ENCODE measurements at regions of chr22 and their contacts with region 1.

Region 1: DNA sequence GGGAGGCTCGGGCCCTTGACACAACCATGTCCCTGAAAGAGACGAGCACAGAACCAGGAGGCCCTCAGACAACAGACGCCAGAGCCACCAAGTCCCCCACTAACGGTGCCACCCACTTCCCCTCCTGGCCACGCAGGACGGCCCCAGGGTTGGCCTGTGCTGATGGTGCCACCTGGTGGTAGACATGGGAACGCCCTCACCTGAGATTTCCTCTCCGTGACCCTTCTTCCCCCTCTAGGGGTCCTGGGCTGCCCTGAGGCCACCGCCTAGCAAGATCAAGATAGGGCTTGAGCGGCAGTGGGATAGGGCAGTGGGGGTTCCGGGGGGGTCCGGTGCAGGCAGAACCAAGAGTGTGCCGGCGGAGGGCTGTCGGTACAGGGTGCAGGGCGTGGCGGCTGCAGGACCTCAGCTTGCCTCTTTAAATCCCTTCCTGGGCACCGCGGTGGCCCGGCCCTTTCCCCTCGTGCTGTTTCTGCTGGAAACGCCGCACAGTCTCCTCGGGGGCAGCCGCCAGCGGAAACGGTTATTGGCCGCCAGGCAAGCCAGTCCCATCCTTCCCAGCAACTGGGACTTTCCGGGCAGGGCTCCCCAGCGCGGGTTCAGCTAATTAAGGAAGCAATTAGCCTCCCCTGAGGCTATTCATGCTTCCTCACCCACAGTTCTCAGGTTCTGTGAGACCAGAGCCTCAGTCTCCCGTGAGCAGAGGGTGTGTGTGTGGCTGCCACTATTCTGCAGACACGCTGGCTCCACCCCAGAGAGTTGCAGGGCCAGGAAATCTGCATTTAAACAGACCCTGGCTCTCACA is 5.5 kb upstream of the NFAM1 start:
- DNase-seq: peak; percentile 74 to 79
- H3K4me3 ChIP-seq: peak overlapping the region in 1 of 3 donors; percentile 27
- H3K27ac ChIP-seq: peak overlapping the region in 1 of 3 donors; percentile 56
- H3K4me1 ChIP-seq: peaks cover 44 to 55% of the 10 kb centered on the region in 2 donors
- H3K27me3 ChIP-seq: no peaks in the 10 kb centered on the region
- CTCF ChIP-seq: peak; percentile 92 to 99 (median 96)
- POLR2A ChIP-seq: no peak

Region 2: DNA sequence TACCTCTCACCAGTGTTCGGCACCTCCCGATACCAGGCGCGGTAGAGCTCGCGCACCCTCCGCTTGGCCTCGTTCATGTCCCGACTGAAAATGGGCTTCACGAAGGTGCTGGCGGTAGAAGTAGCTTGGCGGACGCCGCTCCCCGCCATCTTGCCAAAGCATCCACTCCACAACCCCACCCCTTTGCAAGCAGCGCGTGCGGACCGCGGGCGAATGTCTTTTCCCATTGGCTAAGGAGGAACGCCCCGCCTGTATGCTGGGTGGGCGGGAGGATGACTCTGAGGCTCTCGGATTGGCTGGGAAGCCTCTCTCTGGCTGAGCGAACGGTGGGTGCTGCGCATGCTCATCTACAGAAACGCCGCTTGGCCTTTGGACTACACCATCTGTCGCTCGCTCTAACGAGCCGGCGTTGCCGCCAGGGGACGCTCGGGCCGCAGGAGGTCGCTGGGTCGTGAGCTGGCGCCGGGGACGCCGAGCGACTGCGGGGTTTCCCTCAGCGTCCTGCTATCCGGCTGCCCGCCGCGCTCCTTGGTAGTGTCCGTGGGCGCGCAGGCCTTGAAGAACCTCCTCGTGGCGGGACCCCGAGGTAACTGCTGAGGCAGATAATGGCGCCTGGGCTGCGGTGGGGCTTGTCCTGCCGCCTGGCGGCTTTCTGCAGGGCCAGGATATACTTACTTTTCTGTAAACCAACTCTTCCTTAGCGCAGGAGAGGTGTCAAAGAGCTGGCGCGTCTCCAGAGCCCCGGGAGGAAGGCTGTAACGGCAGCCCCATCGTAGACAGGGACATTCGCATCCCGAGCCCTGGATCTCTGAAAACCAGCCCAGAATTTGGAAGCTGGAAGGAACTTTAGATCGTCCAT is 346.9 kb before region 1 on chr22 and contains the start of gene NDUFA6:
- intact Hi-C with region 1: loop called (anchors 5 kb)
- DNase-seq: peak; percentile 99
- H3K4me3 ChIP-seq: peak within 1 kb of the TSS; percentile 58 to 87 (median 72)
- H3K27ac ChIP-seq: peak within 1 kb of the TSS; percentile 89 to 95 (median 94)
- H3K4me1 ChIP-seq: peaks cover 13 to 14% of the 10 kb centered on the region in 2 donors
- H3K27me3 ChIP-seq: no peaks in the 10 kb centered on the region
- CTCF ChIP-seq: peak; percentile 81 to 99 (median 96)
- POLR2A ChIP-seq: peak; percentile 48 to 98
- total RNA-seq, gene NDUFA6: 32.9 to 85.6 (median 73.4) TPM

Region 3: GRCh38 chr22:42169055-42169469 is 268.6 kb before region 1 on chr22:
- intact Hi-C with region 1: loop called (anchors 2 kb)
- DNase-seq: peak; percentile 75 to 78
- H3K4me3 ChIP-seq: no peak overlapping the region
- H3K27ac ChIP-seq: no peak overlapping the region
- H3K4me1 ChIP-seq: peaks cover 8 to 10% of the 10 kb centered on the region in 2 donors
- H3K27me3 ChIP-seq: no peaks in the 10 kb centered on the region
- CTCF ChIP-seq: peak; percentile 62 to 99 (median 83)
- POLR2A ChIP-seq: no peak

Region 4: GRCh38 chr22:42369245-42370041 is 68.2 kb before region 1 on chr22:
- intact Hi-C with region 1: loop called (anchors 10 kb)
- DNase-seq: peak; percentile 94
- H3K4me3 ChIP-seq: peak overlapping the region in 2 of 3 donors; percentile 67 to 69
- H3K27ac ChIP-seq: peak overlapping the region; percentile 71 to 81 (median 77)
- H3K4me1 ChIP-seq: peaks cover 40% of the 10 kb centered on the region in 2 donors
- H3K27me3 ChIP-seq: no peaks in the 10 kb centered on the region
- CTCF ChIP-seq: no peak
- POLR2A ChIP-seq: peak in 1 of 2 donors; percentile 66

Region 5: GRCh38 chr22:42560781-42561180 is 123.1 kb after region 1 on chr22:
- intact Hi-C with region 1: no loop called
- DNase-seq: no peak
- H3K4me3 ChIP-seq: no peak overlapping the region
- H3K27ac ChIP-seq: peak overlapping the region in 2 of 3 donors; percentile 10 to 51
- H3K4me1 ChIP-seq: peaks cover 19 to 28% of the 10 kb centered on the region in 2 donors
- H3K27me3 ChIP-seq: no peaks in the 10 kb centered on the region
- CTCF ChIP-seq: peak in 4 of 6 experiments; percentile 19 to 39 (median 32)
- POLR2A ChIP-seq: no peak

Measured in thyroid gland (tissue), 4 donors.